Calu3 (cell line): ENCODE measurements at regions of chr1 and their contacts with region 1.

Region 1: DNA sequence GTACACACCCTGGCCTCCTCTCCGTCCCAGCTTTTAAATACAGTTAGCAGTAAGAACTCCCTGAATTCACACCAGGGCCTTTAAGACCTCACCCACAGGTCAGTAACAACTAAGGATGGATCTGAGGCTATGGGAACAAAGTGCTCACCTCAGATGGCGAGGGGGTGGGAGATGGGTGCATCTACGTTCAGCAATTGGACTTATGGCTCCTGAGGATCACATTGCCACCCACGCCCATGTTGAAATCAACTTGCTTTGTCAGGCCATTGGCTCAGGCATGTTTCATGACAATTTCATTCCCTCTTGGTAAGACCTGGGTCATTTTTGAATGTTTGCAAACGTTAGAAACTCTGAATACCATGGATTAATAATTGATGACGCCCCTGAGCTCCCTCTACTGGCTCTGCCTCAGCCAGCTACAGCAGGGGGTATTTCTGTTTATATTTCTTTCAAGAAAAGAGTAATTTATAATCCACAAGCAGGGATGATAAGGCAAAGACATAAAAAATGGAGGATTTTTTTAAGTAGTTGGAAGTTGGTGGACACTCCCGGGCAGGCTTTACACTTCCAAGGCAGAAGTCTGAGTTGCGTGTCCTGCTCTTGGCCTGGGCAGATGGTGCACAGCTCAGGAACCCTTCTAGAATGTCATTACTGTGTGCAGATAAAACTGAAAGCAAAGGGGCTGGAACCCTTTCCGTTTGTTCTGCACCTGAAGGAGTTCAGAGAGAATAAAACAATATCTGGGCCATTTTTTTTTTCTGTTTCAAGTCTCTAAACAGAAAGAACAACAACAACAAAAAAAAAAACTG is 13.7 kb upstream of the LBR start:
- DNase-seq: peak; percentile 75
- H3K4me3 Mint-ChIP-seq: peak overlapping the region; percentile 37
- H3K27ac Mint-ChIP-seq: peak overlapping the region; percentile 92
- H3K4me1 Mint-ChIP-seq: peaks cover 76% of the 10 kb centered on the region
- H3K27me3 Mint-ChIP-seq: no peaks in the 10 kb centered on the region
- CTCF ChIP-seq: peak; percentile 73

Region 2: GRCh38 chr1:225388372-225388771 is 53.1 kb before region 1 on chr1:
- CTCF ChIA-PET with region 1: no interaction called
- intact Hi-C with region 1: no loop called
- DNase-seq: no peak
- H3K4me3 Mint-ChIP-seq: no peak overlapping the region
- H3K27ac Mint-ChIP-seq: no peak overlapping the region
- H3K4me1 Mint-ChIP-seq: no peaks in the 10 kb centered on the region
- H3K27me3 Mint-ChIP-seq: no peaks in the 10 kb centered on the region
- CTCF ChIP-seq: no peak

Region 3: DNA sequence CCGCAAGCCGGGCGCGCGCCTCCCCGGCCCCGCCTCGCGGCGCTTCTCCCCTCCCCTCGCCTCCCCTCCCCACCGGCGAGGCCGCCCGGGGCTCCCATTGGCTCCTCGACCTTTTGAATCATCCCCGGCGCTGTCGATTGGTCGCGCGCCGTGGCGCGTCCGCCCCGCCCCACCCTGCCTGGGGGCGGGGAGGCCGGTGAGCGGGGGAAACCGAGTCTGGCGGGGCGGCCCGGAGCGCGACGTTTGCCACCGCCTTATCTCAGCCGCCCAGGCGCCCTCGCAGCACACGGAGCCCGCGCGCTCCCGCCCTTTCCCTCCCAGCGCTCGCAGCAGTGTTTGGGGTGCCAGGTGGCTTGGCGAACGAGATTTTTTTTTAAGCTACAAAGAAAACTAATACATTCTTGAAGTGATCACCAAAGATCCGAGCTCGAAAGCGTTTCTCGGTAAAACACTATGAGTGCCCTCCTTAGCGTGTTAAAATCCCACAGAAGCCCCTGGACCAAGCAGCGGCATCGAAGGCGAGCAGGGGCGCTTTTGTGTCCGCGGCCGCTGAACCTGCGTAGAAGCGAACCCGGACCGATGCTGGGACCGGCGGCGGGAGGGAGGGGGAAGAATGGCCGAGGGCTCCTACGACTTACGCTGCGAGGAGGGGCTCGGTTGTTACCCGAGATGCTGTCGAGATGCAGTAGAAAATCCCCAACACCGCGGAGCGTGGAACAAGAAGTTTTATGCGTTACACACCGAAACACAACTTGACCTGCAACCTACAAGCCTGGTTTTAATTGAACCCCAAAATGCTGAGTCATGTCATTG is 13.2 kb before region 1 on chr1:
- CTCF ChIA-PET with region 1: interaction called, 16 read pairs
- intact Hi-C with region 1: loop called (anchors 1 kb)
- DNase-seq: peak; percentile 96
- H3K4me3 Mint-ChIP-seq: peak overlapping the region; percentile 91
- H3K27ac Mint-ChIP-seq: peak overlapping the region; percentile 54
- H3K4me1 Mint-ChIP-seq: peaks cover 29% of the 10 kb centered on the region
- H3K27me3 Mint-ChIP-seq: no peaks in the 10 kb centered on the region
- CTCF ChIP-seq: no peak

Region 4: DNA sequence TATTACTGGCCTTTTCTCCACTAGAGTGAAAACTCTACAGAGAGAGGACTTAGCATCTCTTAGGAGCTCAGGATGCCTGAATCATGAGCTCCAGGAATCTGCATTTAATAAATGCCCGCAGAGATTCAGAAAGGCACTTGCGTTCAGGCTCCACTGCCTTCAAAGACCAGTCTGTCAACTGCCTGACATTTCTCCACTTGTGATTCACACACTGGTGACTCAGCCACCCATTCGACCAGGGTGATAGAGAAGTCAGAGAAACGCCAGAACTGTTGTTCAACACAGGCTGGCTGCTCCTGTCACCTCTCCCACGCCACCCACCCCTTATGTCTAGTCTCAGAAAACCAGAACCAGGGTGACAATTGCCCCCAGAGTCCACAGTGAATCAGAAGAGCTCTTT is 13.2 kb after region 1 on chr1:
- CTCF ChIA-PET with region 1: interaction called, 11 read pairs
- intact Hi-C with region 1: no loop called
- DNase-seq: peak; percentile 76
- H3K4me3 Mint-ChIP-seq: peak overlapping the region; percentile 24
- H3K27ac Mint-ChIP-seq: peak overlapping the region; percentile 79
- H3K4me1 Mint-ChIP-seq: peaks cover 63% of the 10 kb centered on the region
- H3K27me3 Mint-ChIP-seq: no peaks in the 10 kb centered on the region
- CTCF ChIP-seq: no peak

Region 5: DNA sequence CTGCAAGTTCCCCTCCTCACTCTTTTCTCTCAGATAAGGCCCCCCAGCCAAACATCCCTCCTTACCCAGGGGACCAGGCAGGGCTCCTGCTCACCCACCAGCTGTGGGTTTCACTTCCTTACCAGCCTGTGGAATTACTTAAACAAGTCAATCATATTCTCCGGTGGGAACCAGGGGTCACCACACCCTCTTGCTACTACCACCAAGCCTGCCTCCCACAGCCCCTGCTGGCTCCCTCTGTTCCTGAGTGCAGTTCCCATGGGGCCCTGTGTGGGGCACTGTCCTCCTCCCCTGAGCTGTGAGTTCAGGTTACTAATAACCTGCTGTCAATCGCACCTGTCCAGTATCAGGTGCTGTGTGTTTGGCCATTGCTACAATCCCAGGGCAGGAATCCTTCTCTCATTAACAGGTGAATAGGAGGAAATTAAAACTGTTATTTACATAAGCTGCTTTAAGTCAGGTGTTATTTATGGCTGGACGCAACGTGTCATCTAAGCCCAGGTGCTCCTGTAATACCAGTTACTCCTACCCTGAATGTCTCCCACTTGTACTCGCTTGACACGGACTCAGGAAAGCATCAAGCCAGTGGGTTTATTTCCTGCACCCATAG is 39.4 kb after region 1 on chr1:
- CTCF ChIA-PET with region 1: no interaction called
- intact Hi-C with region 1: no loop called
- DNase-seq: peak; percentile 89
- H3K4me3 Mint-ChIP-seq: no peak overlapping the region
- H3K27ac Mint-ChIP-seq: no peak overlapping the region
- H3K4me1 Mint-ChIP-seq: peaks cover 15% of the 10 kb centered on the region
- H3K27me3 Mint-ChIP-seq: no peaks in the 10 kb centered on the region
- CTCF ChIP-seq: peak; percentile 96

Region 6: GRCh38 chr1:225911191-225912130 is 469.9 kb after region 1 on chr1:
- CTCF ChIA-PET with region 1: no interaction called
- intact Hi-C with region 1: no loop called
- DNase-seq: peak; percentile 86
- H3K4me3 Mint-ChIP-seq: no peak overlapping the region
- H3K27ac Mint-ChIP-seq: no peak overlapping the region
- H3K4me1 Mint-ChIP-seq: peaks cover 30% of the 10 kb centered on the region
- H3K27me3 Mint-ChIP-seq: no peaks in the 10 kb centered on the region
- CTCF ChIP-seq: peak; percentile 97